Endothelial cell of umbilical vein (primary cell): ENCODE measurements at regions of chr5 and their contacts with region 1.

Region 1: DNA sequence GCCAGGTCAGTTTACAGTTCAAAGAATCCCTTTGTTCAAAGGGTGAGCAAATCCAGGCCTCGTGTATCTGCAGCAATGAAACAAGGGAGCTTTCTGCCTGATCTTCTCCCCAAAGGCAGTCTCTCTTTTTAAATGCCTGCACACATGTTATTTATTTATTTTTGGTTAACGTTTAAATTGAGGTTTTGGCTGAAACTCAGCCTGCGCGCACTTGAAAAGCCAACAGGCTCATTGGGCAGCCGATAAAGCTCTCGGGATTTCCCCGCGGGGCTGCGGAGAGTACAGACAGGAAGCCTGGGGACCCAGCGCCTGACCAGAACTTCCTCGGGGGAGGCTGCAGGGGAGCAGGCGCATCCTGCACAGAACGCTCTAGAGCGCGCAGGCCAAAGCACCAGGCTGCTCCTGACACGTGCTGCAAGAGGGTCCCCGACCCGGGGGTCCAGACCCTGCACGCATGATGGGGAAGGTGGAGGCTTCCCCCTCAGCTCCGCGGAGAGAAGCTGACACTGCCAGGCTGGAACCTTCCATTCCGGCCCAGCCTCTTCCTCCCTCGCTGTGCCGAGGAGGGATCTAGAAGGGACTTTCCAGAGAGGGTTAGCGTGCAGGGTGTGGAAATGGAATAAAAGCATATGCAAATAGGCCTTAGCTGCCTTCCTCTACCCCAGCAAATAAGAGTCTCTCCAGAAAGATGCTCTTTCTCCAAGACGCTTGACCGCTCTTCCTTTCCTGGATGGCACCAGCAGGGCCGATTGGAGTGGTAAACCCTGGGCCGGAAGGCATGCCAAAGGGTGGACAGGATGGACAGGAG is 46.1 kb downstream of the PTTG1 start:
- DNase-seq: peak; percentile 89
- H3K4me3 ChIP-seq: peak overlapping the region; percentile 1 to 51 (median 3)
- H3K27ac ChIP-seq: peak overlapping the region; percentile 67
- H3K4me1 ChIP-seq: peaks cover 60% of the 10 kb centered on the region
- H3K27me3 ChIP-seq: no peaks in the 10 kb centered on the region
- CTCF ChIP-seq: no peak
- POLR2A ChIP-seq: no peak

Region 2: GRCh38 chr5:160450164-160450932 is 17.4 kb before region 1 on chr5:
- CTCF ChIA-PET with region 1: interaction called, 3 read pairs
- POLR2A ChIA-PET with region 1: interaction called, 3 read pairs
- dilution Hi-C with region 1: no loop called
- intact Hi-C with region 1: loop called (anchors 1 kb)
- DNase-seq: peak; percentile 75
- H3K4me3 ChIP-seq: no peak overlapping the region
- H3K27ac ChIP-seq: peak overlapping the region; percentile 97
- H3K4me1 ChIP-seq: peaks cover 41% of the 10 kb centered on the region
- H3K27me3 ChIP-seq: no peaks in the 10 kb centered on the region
- CTCF ChIP-seq: no peak
- POLR2A ChIP-seq: no peak

Region 3: DNA sequence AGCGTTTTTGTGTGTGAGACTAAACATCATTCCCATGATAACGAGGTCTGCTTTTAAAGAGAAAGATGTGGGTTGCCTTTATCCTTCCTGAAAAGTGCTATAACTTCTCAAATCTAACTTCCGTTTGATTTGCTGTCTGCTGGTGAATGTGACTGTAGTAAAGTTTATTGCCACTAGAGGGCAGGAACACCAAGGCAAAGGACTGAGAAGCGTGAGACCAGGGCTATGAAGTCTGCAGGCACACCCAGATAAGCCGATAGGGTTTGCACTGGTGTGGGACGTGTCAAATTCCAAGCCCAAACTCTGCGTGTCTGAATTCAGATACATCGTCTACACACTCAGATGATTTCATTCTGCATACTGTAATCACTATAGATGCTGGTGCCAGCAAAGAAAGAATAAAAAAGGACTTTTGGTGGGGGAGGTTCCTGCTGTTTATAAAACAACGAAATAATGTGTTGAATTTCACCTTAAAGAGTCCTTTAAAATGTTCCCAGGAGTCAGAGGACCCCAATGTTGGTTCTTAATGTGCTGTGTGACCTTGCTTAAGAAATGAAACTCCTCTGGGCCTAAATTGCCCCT is 41.1 kb after region 1 on chr5:
- CTCF ChIA-PET with region 1: interaction called, 8 read pairs
- POLR2A ChIA-PET with region 1: no interaction called
- dilution Hi-C with region 1: no loop called
- intact Hi-C with region 1: loop called (anchors 2 kb)
- DNase-seq: peak; percentile 81
- H3K4me3 ChIP-seq: no peak overlapping the region
- H3K27ac ChIP-seq: no peak overlapping the region
- H3K4me1 ChIP-seq: no peaks in the 10 kb centered on the region
- H3K27me3 ChIP-seq: peaks cover 0 to 5% of the 10 kb centered on the region in 2 experiments
- CTCF ChIP-seq: peak; percentile 70
- POLR2A ChIP-seq: no peak